Posterior vena cava (tissue), 2 donors: ENCODE measurements at regions of chr12 and their contacts with region 1.

Region 1: DNA sequence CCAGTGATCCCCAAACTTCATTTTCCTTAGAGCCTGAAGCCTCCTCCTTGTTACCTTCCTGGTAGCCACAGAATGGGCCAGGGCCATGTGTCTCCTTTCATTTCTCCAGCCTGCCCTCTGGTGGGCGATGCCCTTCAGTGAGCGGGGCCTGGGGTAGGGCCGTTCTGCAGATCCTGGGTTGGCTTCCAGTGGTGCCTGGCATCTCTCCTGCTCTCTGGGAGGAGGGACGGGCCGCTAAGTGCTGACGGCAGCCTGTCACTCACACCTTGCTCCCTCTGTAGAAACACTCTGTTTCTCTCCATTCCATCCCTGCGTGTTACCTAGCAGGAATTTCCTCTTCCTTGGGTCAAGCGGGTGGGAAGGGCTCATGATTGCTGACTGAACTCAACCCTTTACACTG is 232.1 kb downstream of the CACNA1C start:
- DNase-seq: peak; percentile 90

Region 2: GRCh38 chr12:1804545-1805332 is 480.1 kb before region 1 on chr12:
- intact Hi-C with region 1: loop called in 1 of 2 experiments (anchors 10 kb)
- DNase-seq: peak; percentile 95